ENCODE measurements at regions of chr19 and their contacts with region 1.

Region 1: GRCh38 chr19:35545001-35545911 is at the start of gene TMEM147:
- DNase-seq: peak; percentile 44 to 88 (median 79)
- ATAC-seq: peak; percentile 75
- H3K4me3 ChIP-seq: peak within 1 kb of the TSS; percentile 75 to 81
- H3K4me3 Mint-ChIP-seq: peak within 1 kb of the TSS; percentile 88
- H3K27ac ChIP-seq: peak within 1 kb of the TSS; percentile 79 to 85
- H3K27ac Mint-ChIP-seq: peak within 1 kb of the TSS; percentile 90
- H3K4me1 ChIP-seq: peaks cover 21% of the 10 kb centered on the region
- H3K4me1 Mint-ChIP-seq: peaks cover 35% of the 10 kb centered on the region
- H3K27me3 ChIP-seq: no peaks in the 10 kb centered on the region
- H3K27me3 Mint-ChIP-seq: no peaks in the 10 kb centered on the region
- CTCF ChIP-seq: no peak
- total RNA-seq, gene TMEM147: 22.3 to 27.2 TPM

Region 2: GRCh38 chr19:35509861-35510625 is 35.2 kb before region 1 on chr19:
- CTCF ChIA-PET with region 1: interaction called, 19 read pairs
- POLR2A ChIA-PET with region 1: no interaction called
- intact Hi-C with region 1: loop called in 1 of 2 experiments (anchors 1 kb)
- DNase-seq: peak; percentile 56 to 84 (median 77)
- ATAC-seq: peak; percentile 75
- H3K4me3 ChIP-seq: peak overlapping the region; percentile 49 to 59
- H3K4me3 Mint-ChIP-seq: peak overlapping the region; percentile 70
- H3K27ac ChIP-seq: peak overlapping the region in 1 of 2 experiments; percentile 53
- H3K27ac Mint-ChIP-seq: no peak overlapping the region
- H3K4me1 ChIP-seq: peaks cover 18% of the 10 kb centered on the region
- H3K4me1 Mint-ChIP-seq: peaks cover 17% of the 10 kb centered on the region
- H3K27me3 ChIP-seq: peaks cover 0 to 7% of the 10 kb centered on the region in 2 experiments
- H3K27me3 Mint-ChIP-seq: peaks cover 44% of the 10 kb centered on the region
- CTCF ChIP-seq: peak; percentile 80

Region 3: DNA sequence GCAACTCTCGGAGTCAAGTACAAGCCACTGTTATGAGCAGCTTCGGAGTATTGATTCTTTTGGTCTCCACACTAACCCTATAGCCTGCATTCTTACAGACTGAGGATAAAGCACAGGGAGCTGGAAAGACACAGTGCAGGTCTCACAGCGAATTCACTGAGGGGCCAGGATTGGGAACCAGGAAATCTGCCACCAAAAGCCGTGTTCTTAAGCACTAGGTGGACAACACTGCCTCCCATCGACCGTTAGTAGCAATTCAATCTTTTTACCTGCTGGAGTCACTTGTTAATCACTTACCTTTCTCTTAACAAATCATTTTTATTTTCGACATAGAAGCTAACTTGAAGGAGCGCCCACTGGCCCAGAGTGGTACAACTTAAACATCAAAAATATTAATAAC is 47.0 kb after region 1 on chr19:
- CTCF ChIA-PET with region 1: interaction called, 14 read pairs
- POLR2A ChIA-PET with region 1: no interaction called
- intact Hi-C with region 1: loop called in 1 of 2 experiments (anchors 1 kb)
- DNase-seq: peak in 2 of 9 experiments; percentile 64 to 71
- ATAC-seq: no peak
- H3K4me3 ChIP-seq: no peak overlapping the region
- H3K4me3 Mint-ChIP-seq: no peak overlapping the region
- H3K27ac ChIP-seq: no peak overlapping the region
- H3K27ac Mint-ChIP-seq: no peak overlapping the region
- H3K4me1 ChIP-seq: no peaks in the 10 kb centered on the region
- H3K4me1 Mint-ChIP-seq: no peaks in the 10 kb centered on the region
- H3K27me3 ChIP-seq: peaks cover 0 to 2% of the 10 kb centered on the region in 2 experiments
- H3K27me3 Mint-ChIP-seq: peaks cover 11% of the 10 kb centered on the region
- CTCF ChIP-seq: peak; percentile 48

Region 4: GRCh38 chr19:35612559-35613321 is 67.5 kb after region 1 on chr19 and contains the start of gene HAUS5:
- CTCF ChIA-PET with region 1: interaction called, 10 read pairs
- POLR2A ChIA-PET with region 1: no interaction called
- intact Hi-C with region 1: loop called (anchors 1 kb)
- DNase-seq: peak; percentile 90 to 99 (median 96)
- ATAC-seq: peak; percentile 91
- H3K4me3 ChIP-seq: peak within 1 kb of the TSS; percentile 87 to 91
- H3K4me3 Mint-ChIP-seq: peak within 1 kb of the TSS; percentile 86
- H3K27ac ChIP-seq: peak within 1 kb of the TSS; percentile 78 to 81
- H3K27ac Mint-ChIP-seq: peak within 1 kb of the TSS; percentile 94
- H3K4me1 ChIP-seq: peaks cover 26% of the 10 kb centered on the region
- H3K4me1 Mint-ChIP-seq: peaks cover 35% of the 10 kb centered on the region
- H3K27me3 ChIP-seq: no peaks in the 10 kb centered on the region
- H3K27me3 Mint-ChIP-seq: no peaks in the 10 kb centered on the region
- CTCF ChIP-seq: no peak
- total RNA-seq, gene HAUS5: 24.0 to 27.7 TPM